Motor neuron (in vitro differentiated cells): ENCODE measurements at regions of chr1 and their contacts with region 1.

Region 1: GRCh38 chr1:219837274-219837993 is 90.9 kb downstream of the SLC30A10 start:
- ATAC-seq: peak; percentile 53 to 80 (median 66)
- H3K4me3 ChIP-seq: no peak overlapping the region
- H3K27ac ChIP-seq: no peak overlapping the region
- H3K4me1 ChIP-seq: peaks cover 3 to 8% of the 10 kb centered on the region in 2 donors

Region 2: DNA sequence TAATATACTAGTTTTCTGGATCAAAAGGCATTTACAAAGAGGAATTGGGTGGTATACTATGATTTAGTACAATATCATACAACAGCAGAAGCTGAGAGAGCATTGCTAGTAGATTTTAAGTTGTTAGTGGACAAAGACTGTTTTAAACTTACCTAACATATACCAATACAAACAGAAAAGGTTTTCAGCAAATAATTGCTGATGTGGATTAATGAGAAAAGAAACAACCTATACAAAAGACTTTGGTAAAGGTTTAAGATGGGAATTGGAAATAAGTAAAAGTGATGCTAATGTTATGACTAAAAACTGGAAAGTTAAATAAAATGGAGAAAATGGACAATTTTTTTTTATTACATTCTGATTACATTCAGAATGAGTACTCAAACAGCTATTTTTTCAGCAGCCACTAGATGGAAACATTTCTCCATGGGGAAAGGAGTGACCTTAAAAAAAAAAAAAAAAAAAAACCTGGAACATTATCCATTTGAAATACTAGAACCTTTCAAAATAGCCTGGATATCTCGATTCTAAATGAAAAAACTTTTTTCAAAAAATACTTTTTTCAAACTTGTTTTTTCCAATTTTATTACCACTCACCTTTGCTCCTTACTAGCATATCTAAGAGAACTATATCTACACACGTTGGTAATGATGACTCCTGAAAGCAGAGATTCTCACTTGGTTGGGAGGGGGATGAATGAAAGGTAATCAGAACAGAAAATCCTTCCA is 153.5 kb after region 1 on chr1:
- in situ Hi-C with region 1: loop called in 1 of 9 experiments (anchors 25 kb)
- ATAC-seq: peak in 3 of 8 experiments; percentile 27 to 28 (median 28)
- H3K4me3 ChIP-seq: no peak overlapping the region
- H3K27ac ChIP-seq: no peak overlapping the region
- H3K4me1 ChIP-seq: no peaks in the 10 kb centered on the region

Region 3: DNA sequence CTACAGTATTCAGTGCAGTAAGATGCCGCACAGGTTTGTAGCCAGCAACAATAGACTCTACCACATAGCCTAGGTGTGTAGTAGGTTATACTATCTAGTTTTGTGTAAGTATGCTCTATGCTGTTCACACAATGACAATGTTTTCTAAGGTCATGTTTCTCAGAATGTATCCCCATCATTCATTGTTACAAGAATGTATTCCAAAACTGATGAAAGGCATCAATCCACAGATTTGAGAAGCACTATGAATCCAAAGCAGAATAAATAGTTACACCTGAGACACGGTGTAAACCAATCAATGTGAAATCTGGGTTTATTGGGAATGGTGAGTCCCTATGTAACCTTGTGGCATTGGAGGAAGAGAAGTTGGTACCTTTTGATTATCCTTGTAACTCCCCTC is 636.0 kb after region 1 on chr1:
- in situ Hi-C with region 1: no loop called
- ATAC-seq: no peak
- H3K4me3 ChIP-seq: no peak overlapping the region
- H3K27ac ChIP-seq: no peak overlapping the region
- H3K4me1 ChIP-seq: no peaks in the 10 kb centered on the region

Region 4: DNA sequence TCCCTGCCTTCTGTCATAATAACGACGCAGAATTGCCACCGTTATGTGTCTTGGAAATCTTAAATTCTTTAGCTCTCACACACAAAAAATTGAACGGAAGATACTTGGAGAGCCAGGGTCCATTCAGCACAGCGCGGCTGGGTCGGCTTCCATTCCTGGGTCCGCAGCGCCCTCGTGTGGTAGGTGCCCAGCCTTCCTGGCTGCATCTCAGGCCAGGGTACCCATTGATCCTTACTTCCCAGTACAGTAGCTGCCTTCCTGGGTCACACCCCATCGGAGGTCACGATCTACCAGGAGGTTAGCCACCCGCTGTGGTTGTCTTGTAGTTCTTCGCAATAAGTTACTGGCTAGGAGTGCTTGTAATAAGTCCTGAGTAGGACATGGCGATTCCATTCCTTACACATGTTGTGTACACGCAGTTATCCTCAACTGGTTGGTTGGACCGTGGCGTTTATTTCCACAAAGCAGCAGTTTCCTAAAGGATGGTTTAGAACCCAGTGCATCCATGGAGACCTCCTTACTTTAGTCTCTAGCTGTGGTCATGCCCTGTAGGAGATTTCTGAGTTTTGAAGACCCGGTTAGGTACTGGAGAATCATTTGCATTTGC is 939.4 kb after region 1 on chr1:
- in situ Hi-C with region 1: loop called in 1 of 9 experiments (anchors 25 kb)
- ATAC-seq: peak; percentile 99 to 100 (median 100)
- H3K4me3 ChIP-seq: no peak overlapping the region
- H3K27ac ChIP-seq: no peak overlapping the region
- H3K4me1 ChIP-seq: no peaks in the 10 kb centered on the region